Activated B cell treated with CpG ODN at 0.5 μM for 24 hours (primary cell): ENCODE measurements at regions of chr12 and their contacts with region 1.

Region 1: GRCh38 chr12:53675651-53676453 is at the start of gene ATP5MC2:
- DNase-seq: peak; percentile 92
- ATAC-seq: peak; percentile 94
- H3K4me3 Mint-ChIP-seq: peak within 1 kb of the TSS; percentile 99
- H3K27ac Mint-ChIP-seq: peak within 1 kb of the TSS; percentile 97
- H3K4me1 Mint-ChIP-seq: peaks cover 30% of the 10 kb centered on the region
- H3K27me3 Mint-ChIP-seq: peaks cover 18% of the 10 kb centered on the region
- CTCF ChIP-seq: peak; percentile 85
- total RNA-seq, gene ATP5MC2: 330 and 354 TPM in 2 replicates

Region 2: DNA sequence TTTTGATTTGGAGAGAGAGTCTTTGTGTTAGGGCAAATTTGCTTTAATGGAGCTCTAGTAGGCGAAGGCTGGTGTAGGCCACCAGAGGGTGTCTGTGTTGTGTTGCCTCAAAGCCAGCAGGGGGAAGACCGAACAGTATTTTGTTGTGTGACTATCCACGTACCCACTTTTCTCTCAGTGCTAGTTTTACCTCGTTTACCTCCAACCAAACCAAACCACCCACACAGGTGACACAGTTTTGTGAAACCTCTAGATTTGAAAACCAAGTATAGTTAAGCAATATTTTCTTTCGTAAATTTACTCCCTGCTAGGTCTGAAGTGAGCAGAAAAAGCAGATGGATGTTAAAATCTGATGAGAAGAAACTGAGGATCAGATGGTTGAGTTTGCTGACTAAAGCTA is 132.3 kb before region 1 on chr12:
- CTCF ChIA-PET with region 1: interaction called, 79 read pairs
- POLR2A ChIA-PET with region 1: interaction called, 33 read pairs
- intact Hi-C with region 1: loop called (anchors 1 kb)
- DNase-seq: no peak
- ATAC-seq: peak; percentile 93
- H3K4me3 Mint-ChIP-seq: no peak overlapping the region
- H3K27ac Mint-ChIP-seq: peak overlapping the region; percentile 67
- H3K4me1 Mint-ChIP-seq: peaks cover 5% of the 10 kb centered on the region
- H3K27me3 Mint-ChIP-seq: no peaks in the 10 kb centered on the region
- CTCF ChIP-seq: no peak

Region 3: DNA sequence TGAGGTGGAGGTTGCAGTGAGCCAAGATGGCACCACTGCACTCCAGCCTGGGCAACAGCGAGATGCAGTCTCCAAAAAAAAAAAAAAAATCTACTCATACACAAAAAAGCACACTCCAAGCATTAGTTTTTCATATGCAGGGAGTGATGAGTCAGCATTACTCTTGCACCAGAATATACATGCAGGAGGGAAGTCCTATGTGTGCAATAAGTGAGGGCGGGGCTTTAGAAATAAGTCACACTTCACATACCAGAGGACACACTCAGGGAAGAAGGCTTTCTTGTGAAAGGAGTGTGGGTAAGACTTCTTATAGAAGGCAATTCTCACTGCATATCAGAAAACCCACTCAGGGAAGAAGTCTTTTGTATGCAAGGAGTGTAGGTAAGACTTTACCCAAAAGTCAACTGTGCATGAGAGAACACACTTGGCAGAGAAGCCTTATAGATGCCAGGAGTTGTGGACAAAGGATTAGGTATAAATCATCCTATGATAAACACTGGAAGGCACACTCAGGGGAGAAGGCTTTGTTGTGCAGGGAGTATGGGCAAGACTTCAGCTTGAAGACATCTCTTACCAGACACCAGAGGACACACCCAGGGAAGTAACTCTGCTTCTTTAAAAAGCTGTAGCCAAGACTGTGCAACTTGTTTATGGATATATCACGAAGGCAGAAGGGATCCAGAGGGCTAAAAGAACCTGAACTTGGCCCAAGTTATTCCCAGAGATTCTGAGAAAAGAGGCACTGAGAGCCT is 100.2 kb before region 1 on chr12:
- CTCF ChIA-PET with region 1: no interaction called
- POLR2A ChIA-PET with region 1: no interaction called
- intact Hi-C with region 1: no loop called
- DNase-seq: no peak
- ATAC-seq: no peak
- H3K4me3 Mint-ChIP-seq: no peak overlapping the region
- H3K27ac Mint-ChIP-seq: peak overlapping the region; percentile 4
- H3K4me1 Mint-ChIP-seq: peaks cover 32% of the 10 kb centered on the region
- H3K27me3 Mint-ChIP-seq: no peaks in the 10 kb centered on the region
- CTCF ChIP-seq: no peak

Region 4: GRCh38 chr12:53596920-53597363 is 78.9 kb before region 1 on chr12:
- CTCF ChIA-PET with region 1: interaction called, 7 read pairs
- POLR2A ChIA-PET with region 1: interaction called, 3 read pairs
- intact Hi-C with region 1: loop called (anchors 1 kb)
- DNase-seq: no peak
- ATAC-seq: no peak
- H3K4me3 Mint-ChIP-seq: no peak overlapping the region
- H3K27ac Mint-ChIP-seq: no peak overlapping the region
- H3K4me1 Mint-ChIP-seq: peaks cover 22% of the 10 kb centered on the region
- H3K27me3 Mint-ChIP-seq: no peaks in the 10 kb centered on the region
- CTCF ChIP-seq: no peak

Region 5: GRCh38 chr12:53625946-53626701 is 49.7 kb before region 1 on chr12 and contains the start of gene ATF7:
- CTCF ChIA-PET with region 1: interaction called, 7 read pairs
- POLR2A ChIA-PET with region 1: interaction called, 10 read pairs
- intact Hi-C with region 1: loop called (anchors 1 kb)
- DNase-seq: peak; percentile 98
- ATAC-seq: peak; percentile 91
- H3K4me3 Mint-ChIP-seq: peak within 1 kb of the TSS; percentile 98
- H3K27ac Mint-ChIP-seq: peak within 1 kb of the TSS; percentile 99
- H3K4me1 Mint-ChIP-seq: peaks cover 43% of the 10 kb centered on the region
- H3K27me3 Mint-ChIP-seq: no peaks in the 10 kb centered on the region
- CTCF ChIP-seq: no peak
- total RNA-seq, gene ATF7: 29.5 and 36.8 TPM in 2 replicates

Region 6: GRCh38 chr12:53645165-53645564 is 30.7 kb before region 1 on chr12:
- CTCF ChIA-PET with region 1: no interaction called
- POLR2A ChIA-PET with region 1: no interaction called
- intact Hi-C with region 1: no loop called
- DNase-seq: no peak
- ATAC-seq: no peak
- H3K4me3 Mint-ChIP-seq: no peak overlapping the region
- H3K27ac Mint-ChIP-seq: no peak overlapping the region
- H3K4me1 Mint-ChIP-seq: no peaks in the 10 kb centered on the region
- H3K27me3 Mint-ChIP-seq: no peaks in the 10 kb centered on the region
- CTCF ChIP-seq: no peak

Region 7: DNA sequence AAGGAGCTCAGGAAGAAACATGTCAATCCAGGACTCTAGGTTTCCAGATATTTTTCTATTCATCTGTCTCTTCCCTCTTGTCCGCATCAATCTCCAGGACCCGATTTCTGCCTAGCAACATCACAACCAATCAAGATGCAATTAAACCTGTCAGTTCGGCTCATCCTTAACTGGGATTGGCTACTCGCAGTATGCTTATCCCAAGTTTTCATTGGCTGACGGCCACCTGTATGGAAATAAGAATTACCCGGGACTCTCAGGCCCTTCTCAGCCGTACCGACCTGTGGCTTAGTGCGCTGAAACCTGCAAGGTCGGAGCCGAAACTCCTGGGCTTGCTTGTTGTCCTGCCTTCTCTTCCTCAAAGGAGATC is 20.4 kb after region 1 on chr12:
- CTCF ChIA-PET with region 1: interaction called, 3 read pairs
- POLR2A ChIA-PET with region 1: interaction called, 4 read pairs
- intact Hi-C with region 1: loop called (anchors 2 kb)
- DNase-seq: no peak
- ATAC-seq: peak; percentile 38
- H3K4me3 Mint-ChIP-seq: peak overlapping the region; percentile 66
- H3K27ac Mint-ChIP-seq: no peak overlapping the region
- H3K4me1 Mint-ChIP-seq: peaks cover 29% of the 10 kb centered on the region
- H3K27me3 Mint-ChIP-seq: peaks cover 69% of the 10 kb centered on the region
- CTCF ChIP-seq: no peak

Region 8: DNA sequence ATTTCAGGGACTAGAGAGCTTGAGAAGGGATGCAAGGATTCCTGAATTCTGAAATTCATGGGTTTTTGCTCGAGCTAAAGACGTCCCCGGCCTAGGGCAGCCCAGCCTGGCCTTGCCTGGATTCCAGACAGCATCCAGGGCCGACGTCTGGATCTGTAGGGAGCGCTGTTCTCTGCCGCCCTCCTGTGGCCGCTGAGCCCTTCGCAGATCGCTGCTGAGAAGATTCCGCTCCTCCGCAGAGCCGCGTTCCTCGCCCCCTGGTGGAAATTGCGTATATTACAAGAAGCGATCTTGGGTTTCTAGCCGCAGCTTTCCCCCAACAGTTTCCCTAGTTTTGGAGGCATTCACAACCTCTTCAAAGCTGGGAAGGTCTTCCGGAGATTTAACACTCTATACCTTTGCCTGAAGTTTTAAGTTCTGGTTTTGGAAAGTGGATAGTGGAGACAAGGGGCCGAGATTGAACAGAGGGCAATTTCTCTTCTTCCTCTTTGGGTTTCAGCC is 70.8 kb after region 1 on chr12:
- CTCF ChIA-PET with region 1: interaction called, 5 read pairs
- POLR2A ChIA-PET with region 1: interaction called, 4 read pairs
- intact Hi-C with region 1: loop called (anchors 1 kb)
- DNase-seq: peak; percentile 70
- ATAC-seq: peak; percentile 75
- H3K4me3 Mint-ChIP-seq: peak overlapping the region; percentile 44
- H3K27ac Mint-ChIP-seq: peak overlapping the region; percentile 57
- H3K4me1 Mint-ChIP-seq: peaks cover 18% of the 10 kb centered on the region
- H3K27me3 Mint-ChIP-seq: peaks cover 40% of the 10 kb centered on the region
- CTCF ChIP-seq: peak; percentile 100